Colonic mucosa (tissue), 4 donors: ENCODE measurements at regions of chr5 and their contacts with region 1.

Region 1: DNA sequence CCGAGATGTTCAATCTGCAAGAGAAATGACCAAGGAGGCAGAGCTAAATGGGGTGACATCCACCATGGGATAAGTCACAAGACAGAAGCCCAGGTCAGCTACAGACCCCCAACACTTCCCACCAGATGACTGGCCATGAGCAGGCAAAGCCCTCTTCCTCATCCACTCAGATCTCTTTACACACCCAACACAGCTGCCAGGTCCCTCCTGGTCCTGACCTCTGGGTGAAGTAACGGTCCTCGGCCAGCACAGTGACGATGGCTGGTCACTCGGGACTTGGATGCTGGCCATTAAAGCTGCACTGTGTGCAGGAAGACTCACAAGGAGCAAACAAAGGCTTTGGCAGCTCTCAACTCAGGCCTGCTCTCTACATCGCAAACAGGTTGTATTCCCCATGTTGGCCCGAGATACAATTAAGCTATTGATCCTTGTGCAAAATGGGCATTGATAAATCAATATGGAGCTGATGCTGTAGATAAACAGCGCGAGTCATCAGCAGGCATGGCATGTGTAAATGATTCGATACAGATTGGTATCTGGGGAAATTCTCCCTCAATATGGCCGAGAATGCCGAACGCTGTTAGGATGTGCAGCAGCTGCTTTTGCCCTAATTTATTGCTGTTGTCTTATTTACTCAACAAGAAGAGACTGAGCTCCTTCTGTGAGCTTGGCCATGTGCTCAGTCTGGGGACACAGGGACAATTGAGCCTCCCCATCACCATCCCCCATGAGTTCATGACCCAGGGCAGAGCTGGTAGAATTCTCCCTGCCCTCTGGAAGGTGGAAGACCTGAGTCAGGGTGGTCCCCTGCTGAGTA is 98.7 kb downstream of the C5orf15 start:
- DNase-seq: no peak
- H3K4me3 ChIP-seq: no peak overlapping the region
- H3K27ac ChIP-seq: no peak overlapping the region
- H3K4me1 ChIP-seq: no peaks in the 10 kb centered on the region
- H3K27me3 ChIP-seq: no peaks in the 10 kb centered on the region
- CTCF ChIP-seq: peak; percentile 19

Region 2: DNA sequence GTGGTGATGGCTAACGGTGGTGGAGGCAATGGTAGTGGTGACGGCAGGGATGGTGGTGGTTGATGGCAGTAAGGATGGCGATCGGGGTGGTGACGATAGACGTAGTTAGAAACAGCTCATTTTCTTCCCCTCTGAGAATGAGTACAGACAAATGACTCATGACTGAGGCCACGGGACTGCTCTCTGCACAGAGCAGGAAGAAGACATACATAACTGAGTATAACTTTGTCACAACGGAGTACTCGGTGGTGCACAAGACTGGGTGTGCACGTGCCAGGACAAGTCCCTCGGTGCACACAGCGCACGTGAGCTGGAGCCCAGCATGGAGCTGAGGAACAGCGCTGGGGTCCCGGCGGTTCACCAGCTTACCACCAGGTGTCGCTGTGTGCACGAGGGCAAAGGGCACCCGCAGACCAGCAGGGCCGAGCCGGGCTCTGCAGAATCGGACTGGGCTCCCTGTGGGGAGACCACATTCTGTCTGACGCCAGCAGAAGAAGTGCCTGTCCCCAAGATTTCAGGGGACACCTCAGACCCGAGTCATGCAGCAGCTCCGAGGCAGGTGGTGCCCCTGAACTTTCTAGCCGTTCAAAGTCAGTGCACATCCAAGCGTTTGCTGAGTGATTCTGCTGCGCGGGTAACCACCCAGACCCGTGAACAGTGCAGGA is 446.0 kb before region 1 on chr5:
- intact Hi-C with region 1: loop called (anchors 10 kb)
- DNase-seq: peak; percentile 65
- H3K4me3 ChIP-seq: no peak overlapping the region
- H3K27ac ChIP-seq: no peak overlapping the region
- H3K4me1 ChIP-seq: no peaks in the 10 kb centered on the region
- H3K27me3 ChIP-seq: no peaks in the 10 kb centered on the region
- CTCF ChIP-seq: peak; percentile 93

Region 3: GRCh38 chr5:133709209-133709725 is 160.5 kb before region 1 on chr5:
- intact Hi-C with region 1: no loop called
- DNase-seq: no peak
- H3K4me3 ChIP-seq: no peak overlapping the region
- H3K27ac ChIP-seq: no peak overlapping the region
- H3K4me1 ChIP-seq: no peaks in the 10 kb centered on the region
- H3K27me3 ChIP-seq: no peaks in the 10 kb centered on the region
- CTCF ChIP-seq: no peak

Region 4: GRCh38 chr5:134051305-134051704 is 181.6 kb after region 1 on chr5:
- intact Hi-C with region 1: no loop called
- DNase-seq: no peak
- H3K4me3 ChIP-seq: no peak overlapping the region
- H3K27ac ChIP-seq: no peak overlapping the region
- H3K4me1 ChIP-seq: no peaks in the 10 kb centered on the region
- H3K27me3 ChIP-seq: no peaks in the 10 kb centered on the region
- CTCF ChIP-seq: no peak